ENCODE measurements at regions of chr4 and their contacts with region 1.

Region 1: DNA sequence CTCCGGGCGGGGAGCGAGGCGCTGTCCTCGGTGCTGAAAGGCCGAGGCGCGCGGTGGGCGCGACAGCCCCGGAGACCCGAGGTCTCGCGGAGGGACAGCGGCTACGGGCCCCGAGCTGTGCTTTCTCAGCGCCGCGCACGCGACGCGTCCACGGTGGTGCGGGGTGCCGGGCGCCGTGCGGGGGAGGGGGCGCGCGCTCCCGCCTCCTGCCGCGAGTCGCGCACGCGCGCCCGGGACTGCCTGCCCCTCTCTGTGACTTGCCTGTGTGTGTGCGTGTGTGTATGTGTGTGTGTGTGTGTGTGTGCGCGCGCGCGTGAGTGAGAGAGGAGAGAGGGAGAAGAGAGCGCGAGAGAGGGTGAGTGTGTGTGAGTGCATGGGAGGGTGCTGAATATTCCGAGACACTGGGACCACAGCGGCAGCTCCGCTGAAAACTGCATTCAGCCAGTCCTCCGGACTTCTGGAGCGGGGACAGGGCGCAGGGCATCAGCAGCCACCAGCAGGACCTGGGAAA is at the start of gene GRIA2:
- DNase-seq: no peak
- ATAC-seq: peak; percentile 23 to 33
- H3K4me3 ChIP-seq: peak within 1 kb of the TSS in 1 of 4 donors; percentile 47
- H3K27ac ChIP-seq: no peak within 1 kb of the TSS
- H3K4me1 ChIP-seq: peaks cover 7 to 11% of the 10 kb centered on the region in 2 donors
- H3K27me3 ChIP-seq: peaks cover 38 to 56% (median 47%) of the 10 kb centered on the region in 3 donors
- CTCF ChIP-seq: no peak
- POLR2A ChIP-seq: no peak
- total RNA-seq, gene GRIA2: not detected

Region 2: GRCh38 chr4:157291071-157291470 is 70.6 kb after region 1 on chr4:
- in situ Hi-C with region 1: loop called in 1 of 4 experiments (anchors 5 kb)
- intact Hi-C with region 1: no loop called
- DNase-seq: no peak
- ATAC-seq: peak in 1 of 2 donors; percentile 57
- H3K4me3 ChIP-seq: no peak overlapping the region
- H3K27ac ChIP-seq: no peak overlapping the region
- H3K4me1 ChIP-seq: peaks cover 0 to 9% of the 10 kb centered on the region in 2 donors
- H3K27me3 ChIP-seq: no peaks in the 10 kb centered on the region
- CTCF ChIP-seq: peak in 1 of 5 experiments; percentile 41
- POLR2A ChIP-seq: no peak

Region 3: DNA sequence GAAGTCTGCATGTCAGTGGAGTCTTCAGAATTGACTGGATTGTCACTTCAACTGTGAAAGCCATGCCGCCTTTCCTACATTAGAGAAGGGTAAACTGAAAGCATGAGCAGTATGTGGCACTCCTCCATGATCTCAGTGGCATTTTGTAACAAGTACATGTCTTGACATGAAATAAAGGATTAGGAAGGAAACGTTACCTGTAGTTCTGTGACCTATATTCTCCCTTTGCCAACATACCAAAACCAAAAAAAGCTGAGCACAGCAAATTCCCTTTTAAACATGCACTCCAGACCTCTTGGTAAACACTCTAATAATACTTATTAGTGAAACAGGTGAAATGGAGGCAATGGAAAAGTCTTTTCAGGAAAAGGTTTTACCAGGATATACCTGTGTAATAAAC is 344.3 kb after region 1 on chr4:
- in situ Hi-C with region 1: no loop called
- intact Hi-C with region 1: no loop called
- DNase-seq: no peak
- ATAC-seq: no peak
- H3K4me3 ChIP-seq: no peak overlapping the region
- H3K27ac ChIP-seq: no peak overlapping the region
- H3K4me1 ChIP-seq: no peaks in the 10 kb centered on the region
- H3K27me3 ChIP-seq: no peaks in the 10 kb centered on the region
- CTCF ChIP-seq: no peak
- POLR2A ChIP-seq: no peak

Region 4: GRCh38 chr4:157961229-157961990 is 741.0 kb after region 1 on chr4:
- in situ Hi-C with region 1: loop called in 1 of 4 experiments (anchors 25 kb)
- intact Hi-C with region 1: no loop called
- DNase-seq: no peak
- ATAC-seq: no peak
- H3K4me3 ChIP-seq: no peak overlapping the region
- H3K27ac ChIP-seq: no peak overlapping the region
- H3K4me1 ChIP-seq: no peaks in the 10 kb centered on the region
- H3K27me3 ChIP-seq: no peaks in the 10 kb centered on the region
- CTCF ChIP-seq: no peak
- POLR2A ChIP-seq: no peak